ENCODE measurements at regions of chr19 and their contacts with region 1.

Region 1: DNA sequence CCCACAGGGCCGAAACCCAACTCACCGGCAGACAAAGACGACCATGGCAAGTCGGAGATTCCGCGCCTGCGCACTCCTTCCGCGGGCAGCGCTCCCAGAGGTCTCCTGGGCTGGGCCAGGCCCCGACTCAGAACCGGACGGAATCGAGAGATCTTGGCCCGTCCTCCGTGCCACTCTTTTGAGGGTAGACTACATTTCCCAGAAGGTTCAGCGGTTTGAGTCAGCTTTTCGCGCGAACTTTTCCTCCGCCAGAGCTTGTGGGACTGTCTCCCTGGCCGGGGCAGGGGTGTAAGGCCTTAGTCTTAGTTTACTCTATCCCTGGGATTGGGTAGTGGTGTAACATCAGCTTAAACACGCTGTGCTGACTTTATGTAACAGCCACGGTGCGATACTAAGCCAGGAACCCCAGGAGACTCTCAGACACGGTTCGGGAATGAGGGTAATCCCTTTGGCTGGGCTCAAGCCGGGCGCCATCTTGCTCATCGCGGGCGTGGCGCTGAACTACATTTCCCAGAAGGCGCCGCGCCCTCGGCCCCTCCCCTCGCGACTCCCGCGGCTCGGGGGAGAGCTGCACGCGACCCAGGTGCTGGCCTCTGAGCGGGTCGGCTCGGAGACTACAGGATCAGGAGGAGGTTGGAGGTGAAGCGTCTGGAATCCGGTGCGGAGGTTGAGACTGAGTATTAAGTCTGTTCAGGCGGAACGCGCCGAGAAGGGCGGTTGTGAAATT is at the start of gene ZNF260:
- DNase-seq: peak; percentile 96 to 97
- H3K4me3 ChIP-seq: peak within 1 kb of the TSS; percentile 92
- H3K4me3 Mint-ChIP-seq: peak within 1 kb of the TSS; percentile 100
- H3K27ac Mint-ChIP-seq: peak within 1 kb of the TSS; percentile 99
- H3K4me1 ChIP-seq: no peaks in the 10 kb centered on the region
- H3K4me1 Mint-ChIP-seq: peaks cover 6% of the 10 kb centered on the region
- H3K27me3 ChIP-seq: no peaks in the 10 kb centered on the region
- H3K27me3 Mint-ChIP-seq: no peaks in the 10 kb centered on the region
- CTCF ChIP-seq: no peak
- total RNA-seq, gene ZNF260: 12.5 and 13.2 TPM in 2 replicates

Region 2: DNA sequence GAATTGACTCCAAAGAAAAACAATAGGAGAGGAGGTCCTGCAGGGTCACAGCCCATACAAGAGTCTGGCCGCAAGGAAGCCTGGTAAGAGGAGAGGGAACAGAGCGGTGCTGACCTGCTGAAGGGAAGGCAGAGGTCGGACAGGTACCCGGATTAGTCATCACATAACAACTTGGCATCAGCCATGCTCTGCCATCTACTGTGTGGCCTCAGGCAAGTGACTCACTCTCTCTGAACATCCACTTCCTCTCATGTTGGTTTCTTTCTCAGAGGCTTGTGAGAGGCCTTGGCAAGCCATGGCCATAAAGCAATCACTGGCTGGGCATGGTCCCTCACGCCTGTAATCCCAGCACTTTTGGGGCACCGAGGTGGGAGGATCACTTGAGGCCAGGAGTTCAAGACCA is 395.9 kb before region 1 on chr19:
- CTCF ChIA-PET with region 1: no interaction called
- POLR2A ChIA-PET with region 1: no interaction called
- intact Hi-C with region 1: loop called (anchors 1 kb)
- DNase-seq: no peak
- H3K4me3 ChIP-seq: no peak overlapping the region
- H3K4me3 Mint-ChIP-seq: no peak overlapping the region
- H3K27ac Mint-ChIP-seq: no peak overlapping the region
- H3K4me1 ChIP-seq: peaks cover 9% of the 10 kb centered on the region
- H3K4me1 Mint-ChIP-seq: peaks cover 22% of the 10 kb centered on the region
- H3K27me3 ChIP-seq: no peaks in the 10 kb centered on the region
- H3K27me3 Mint-ChIP-seq: no peaks in the 10 kb centered on the region
- CTCF ChIP-seq: no peak

Region 3: GRCh38 chr19:36418287-36419001 is 109.9 kb before region 1 on chr19 and contains the start of gene ZFP82:
- CTCF ChIA-PET with region 1: no interaction called
- POLR2A ChIA-PET with region 1: no interaction called
- intact Hi-C with region 1: loop called (anchors 2 kb)
- DNase-seq: peak; percentile 70 to 80
- H3K4me3 ChIP-seq: peak within 1 kb of the TSS; percentile 61
- H3K4me3 Mint-ChIP-seq: peak within 1 kb of the TSS; percentile 97
- H3K27ac Mint-ChIP-seq: peak within 1 kb of the TSS; percentile 92
- H3K4me1 ChIP-seq: no peaks in the 10 kb centered on the region
- H3K4me1 Mint-ChIP-seq: no peaks in the 10 kb centered on the region
- H3K27me3 ChIP-seq: no peaks in the 10 kb centered on the region
- H3K27me3 Mint-ChIP-seq: no peaks in the 10 kb centered on the region
- CTCF ChIP-seq: no peak
- total RNA-seq, gene ZFP82: 3.6 and 3.7 TPM in 2 replicates

Region 4: GRCh38 chr19:36573020-36573885 is 44.9 kb after region 1 on chr19 and contains the start of gene ZNF529:
- CTCF ChIA-PET with region 1: no interaction called
- POLR2A ChIA-PET with region 1: interaction called, 28 read pairs
- intact Hi-C with region 1: loop called (anchors 1 kb)
- DNase-seq: peak; percentile 95
- H3K4me3 ChIP-seq: peak within 1 kb of the TSS; percentile 74
- H3K4me3 Mint-ChIP-seq: peak within 1 kb of the TSS; percentile 87
- H3K27ac Mint-ChIP-seq: peak within 1 kb of the TSS; percentile 93
- H3K4me1 ChIP-seq: 0 out of 2 replicates have a peak, but pooled peaks cover 6% of the 10 kb centered on the region
- H3K4me1 Mint-ChIP-seq: peaks cover 25% of the 10 kb centered on the region
- H3K27me3 ChIP-seq: no peaks in the 10 kb centered on the region
- H3K27me3 Mint-ChIP-seq: no peaks in the 10 kb centered on the region
- CTCF ChIP-seq: peak in 1 of 2 experiments; percentile 7
- total RNA-seq, gene ZNF529: 5.6 and 10.5 TPM in 2 replicates

Region 5: GRCh38 chr19:36687214-36688056 is 159.1 kb after region 1 on chr19 and contains the start of gene ZNF567:
- CTCF ChIA-PET with region 1: no interaction called
- POLR2A ChIA-PET with region 1: interaction called, 3 read pairs
- intact Hi-C with region 1: loop called (anchors 5 kb)
- DNase-seq: peak; percentile 98 to 99
- H3K4me3 ChIP-seq: peak within 1 kb of the TSS; percentile 93
- H3K4me3 Mint-ChIP-seq: peak within 1 kb of the TSS; percentile 94
- H3K27ac Mint-ChIP-seq: peak within 1 kb of the TSS; percentile 99
- H3K4me1 ChIP-seq: no peaks in the 10 kb centered on the region
- H3K4me1 Mint-ChIP-seq: peaks cover 8% of the 10 kb centered on the region
- H3K27me3 ChIP-seq: no peaks in the 10 kb centered on the region
- H3K27me3 Mint-ChIP-seq: no peaks in the 10 kb centered on the region
- CTCF ChIP-seq: peak in 1 of 2 experiments; percentile 23
- total RNA-seq, gene ZNF567: 8.6 and 9.0 TPM in 2 replicates

Region 6: DNA sequence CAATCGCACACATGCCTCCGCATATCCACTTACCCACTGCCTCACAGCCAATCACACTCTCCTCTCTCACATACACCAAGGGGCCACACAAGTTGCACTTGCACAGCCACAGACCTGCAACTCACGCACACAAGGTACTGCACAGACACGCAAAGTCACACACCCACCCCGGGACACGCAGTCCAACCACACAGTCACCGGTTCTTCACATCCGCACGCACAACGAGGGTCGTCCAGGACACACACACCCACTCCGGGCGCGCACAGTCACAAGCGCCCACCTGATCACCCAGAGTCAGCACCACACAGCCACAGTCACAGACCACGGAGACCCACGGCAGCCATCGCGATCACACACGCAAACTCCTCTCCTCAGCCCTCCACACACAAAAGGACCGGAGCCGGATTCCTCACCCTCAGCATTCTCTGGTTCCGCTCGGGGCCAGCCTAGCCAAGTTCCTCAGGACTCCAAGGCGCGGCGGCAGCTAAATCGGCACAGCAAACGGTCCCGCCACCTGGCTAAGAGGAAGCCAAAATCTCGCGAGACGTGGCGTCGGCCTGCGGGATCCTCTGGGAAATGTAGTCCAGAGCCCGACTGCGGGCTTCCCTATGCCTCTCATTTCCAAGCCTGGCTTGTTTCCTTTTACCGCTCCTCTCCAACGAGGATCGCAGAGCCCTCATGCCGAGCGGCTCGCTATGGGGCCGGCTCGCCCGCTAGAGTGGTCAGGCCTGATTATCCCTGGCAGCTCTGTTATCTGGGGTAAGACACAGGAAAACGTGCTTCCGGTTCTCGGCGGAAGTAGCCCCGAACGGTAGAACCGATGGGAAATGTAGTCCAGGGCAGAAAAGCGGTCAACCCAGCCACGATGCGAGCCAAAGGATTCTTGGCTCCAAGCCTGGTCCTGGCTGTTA is 244.2 kb after region 1 on chr19 and contains the start of gene ZNF850:
- CTCF ChIA-PET with region 1: no interaction called
- POLR2A ChIA-PET with region 1: no interaction called
- intact Hi-C with region 1: loop called (anchors 5 kb)
- DNase-seq: peak; percentile 93 to 96
- H3K4me3 ChIP-seq: peak within 1 kb of the TSS; percentile 66
- H3K4me3 Mint-ChIP-seq: peak within 1 kb of the TSS; percentile 96
- H3K27ac Mint-ChIP-seq: peak within 1 kb of the TSS; percentile 88
- H3K4me1 ChIP-seq: no peaks in the 10 kb centered on the region
- H3K4me1 Mint-ChIP-seq: peaks cover 17% of the 10 kb centered on the region
- H3K27me3 ChIP-seq: no peaks in the 10 kb centered on the region
- H3K27me3 Mint-ChIP-seq: no peaks in the 10 kb centered on the region
- CTCF ChIP-seq: no peak
- total RNA-seq, gene ZNF850: 7.2 and 7.8 TPM in 2 replicates

Measured in Caco-2 (cell line).